Activated naive CD8-positive, alpha-beta T cell treated with anti-CD3 and anti-CD28 coated beads, Interleukin-2, amount 10 ng/mL, durations not matched to agents 7 days and 5 days (primary cell): ENCODE measurements at regions of chr15 and their contacts with region 1.

Region 1: DNA sequence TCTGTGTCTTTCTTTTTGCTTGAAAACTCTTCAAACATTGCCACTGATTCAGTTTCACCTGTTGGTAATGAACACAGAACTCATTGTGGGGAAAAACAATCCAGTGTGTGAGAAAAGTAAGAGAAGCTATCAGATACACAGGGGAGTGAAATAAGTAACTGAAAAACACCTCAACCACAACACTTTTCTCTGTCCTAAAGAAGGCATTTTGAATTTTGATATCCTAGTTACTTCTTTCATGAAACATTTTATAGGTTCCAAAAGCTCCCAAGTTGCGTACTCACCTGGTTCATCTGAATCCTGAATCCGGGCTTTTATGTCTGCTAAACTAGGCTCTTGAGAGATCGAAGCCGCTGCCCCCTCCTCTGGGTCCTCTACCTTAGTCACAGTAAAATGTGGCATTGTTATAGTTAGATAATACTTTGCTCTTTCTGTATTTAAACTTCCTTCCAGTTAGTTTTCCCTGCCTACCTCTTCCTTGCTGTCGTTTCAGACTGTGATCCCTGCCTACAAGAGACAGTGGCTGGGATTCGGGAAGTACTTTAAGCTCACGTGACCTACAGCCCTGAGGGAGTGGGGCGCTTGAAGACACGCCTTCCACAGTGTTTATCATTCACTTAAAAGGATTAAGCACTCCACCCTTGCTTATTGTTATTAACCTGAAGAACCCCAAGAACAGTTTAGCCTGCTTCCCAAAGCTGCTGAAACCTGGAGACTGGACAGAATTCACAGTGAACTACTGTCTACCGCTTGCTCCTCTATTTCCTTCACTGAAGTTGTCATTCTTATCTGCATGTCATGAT is 19.1 kb downstream of the SLC12A6 start:
- DNase-seq: no peak
- ATAC-seq: peak; percentile 71
- H3K4me3 Mint-ChIP-seq: peak overlapping the region; percentile 95
- H3K27ac Mint-ChIP-seq: peak overlapping the region; percentile 93
- H3K4me1 Mint-ChIP-seq: peaks cover 15% of the 10 kb centered on the region
- H3K27me3 Mint-ChIP-seq: no peaks in the 10 kb centered on the region

Region 2: DNA sequence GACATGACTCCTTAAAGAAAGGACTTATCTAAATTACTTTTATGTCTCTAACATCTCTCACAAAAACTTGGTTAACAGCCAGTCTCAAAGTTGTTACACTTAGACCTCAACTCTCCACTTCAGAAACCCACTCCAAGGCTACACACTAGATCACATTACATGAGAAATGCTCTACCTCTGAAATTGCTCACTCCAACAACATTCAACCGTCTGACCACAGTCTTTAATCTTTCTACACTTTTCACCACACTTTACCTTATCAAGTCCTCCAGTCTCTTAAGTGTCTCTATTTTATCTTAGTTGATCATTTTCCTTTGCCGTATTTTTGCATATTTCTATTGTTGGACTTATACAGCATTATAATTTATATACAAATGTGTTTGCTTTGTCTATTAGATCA is 13.3 kb after region 1 on chr15:
- POLR2A ChIA-PET with region 1: interaction called, 34 read pairs
- DNase-seq: no peak
- ATAC-seq: peak; percentile 68
- H3K4me3 Mint-ChIP-seq: peak overlapping the region; percentile 45
- H3K27ac Mint-ChIP-seq: peak overlapping the region; percentile 83
- H3K4me1 Mint-ChIP-seq: peaks cover 64% of the 10 kb centered on the region
- H3K27me3 Mint-ChIP-seq: no peaks in the 10 kb centered on the region

Region 3: GRCh38 chr15:34337557-34338306 is 19.3 kb after region 1 on chr15 and contains the start of gene SLC12A6:
- POLR2A ChIA-PET with region 1: interaction called, 34 read pairs
- DNase-seq: peak; percentile 98
- ATAC-seq: peak; percentile 84
- H3K4me3 Mint-ChIP-seq: peak within 1 kb of the TSS; percentile 96
- H3K27ac Mint-ChIP-seq: peak within 1 kb of the TSS; percentile 99
- H3K4me1 Mint-ChIP-seq: peaks cover 40% of the 10 kb centered on the region
- H3K27me3 Mint-ChIP-seq: no peaks in the 10 kb centered on the region
- total RNA-seq, gene SLC12A6: 42.0 to 44.9 TPM

Region 4: GRCh38 chr15:34358367-34358766 is 39.9 kb after region 1 on chr15:
- POLR2A ChIA-PET with region 1: no interaction called
- DNase-seq: no peak
- ATAC-seq: no peak
- H3K4me3 Mint-ChIP-seq: no peak overlapping the region
- H3K27ac Mint-ChIP-seq: no peak overlapping the region
- H3K4me1 Mint-ChIP-seq: peaks cover 8% of the 10 kb centered on the region
- H3K27me3 Mint-ChIP-seq: no peaks in the 10 kb centered on the region